CD4-positive, alpha-beta T cell (primary cell): ENCODE measurements at regions of chr15 and their contacts with region 1.

Region 1: DNA sequence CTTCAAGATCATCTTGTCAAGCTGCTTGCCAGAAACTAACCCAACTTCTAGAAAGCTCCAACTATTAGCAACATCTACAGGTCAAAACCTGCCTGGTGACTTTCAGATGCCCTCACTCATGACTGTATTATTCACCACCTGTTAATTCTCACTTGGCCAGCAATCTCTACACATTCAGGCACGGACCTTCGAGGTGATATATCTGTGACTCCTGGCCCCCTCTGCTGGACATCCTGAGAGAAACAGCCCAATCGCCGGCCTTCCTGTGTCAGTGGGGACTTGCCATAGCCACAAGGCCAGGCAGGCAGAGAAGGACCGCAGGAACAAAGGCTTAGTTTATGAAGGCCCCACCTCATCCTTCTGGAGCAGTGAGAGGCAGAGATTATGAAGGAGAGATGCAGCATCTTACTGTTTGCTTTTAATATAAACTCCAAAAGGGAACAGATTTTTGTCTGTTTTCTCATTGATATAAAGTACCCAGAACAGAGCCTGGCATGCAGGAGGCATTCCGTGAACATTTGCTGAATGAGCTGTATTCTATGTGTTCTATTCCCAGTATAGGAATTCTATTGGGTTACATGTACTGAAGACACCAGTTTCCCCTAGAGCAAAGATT is 24.4 kb upstream of the OCA2 start:
- DNase-seq: peak in 11 of 14 experiments; percentile 13 to 78 (median 43)
- ATAC-seq: peak; percentile 57
- H3K4me3 ChIP-seq: no peak overlapping the region
- H3K4me3 Mint-ChIP-seq: no peak overlapping the region
- H3K27ac ChIP-seq: no peak overlapping the region
- H3K27ac Mint-ChIP-seq: no peak overlapping the region
- H3K4me1 ChIP-seq: peaks cover 15% of the 10 kb centered on the region
- H3K4me1 Mint-ChIP-seq: peaks cover 12% of the 10 kb centered on the region
- H3K27me3 ChIP-seq: no peaks in the 10 kb centered on the region
- H3K27me3 Mint-ChIP-seq: no peaks in the 10 kb centered on the region
- CTCF ChIP-seq: peak; percentile 47

Region 2: GRCh38 chr15:28086175-28086703 is 37.3 kb before region 1 on chr15:
- CTCF ChIA-PET with region 1: no interaction called
- POLR2A ChIA-PET with region 1: no interaction called
- intact Hi-C with region 1: loop called (anchors 1 to 2 kb)
- DNase-seq: peak in 12 of 14 experiments; percentile 22 to 84 (median 48)
- ATAC-seq: peak; percentile 100
- H3K4me3 ChIP-seq: no peak overlapping the region
- H3K4me3 Mint-ChIP-seq: no peak overlapping the region
- H3K27ac ChIP-seq: no peak overlapping the region
- H3K27ac Mint-ChIP-seq: no peak overlapping the region
- H3K4me1 ChIP-seq: peaks cover 3% of the 10 kb centered on the region
- H3K4me1 Mint-ChIP-seq: no peaks in the 10 kb centered on the region
- H3K27me3 ChIP-seq: peaks cover 18 to 27% of the 10 kb centered on the region in 2 experiments
- H3K27me3 Mint-ChIP-seq: peaks cover 57% of the 10 kb centered on the region
- CTCF ChIP-seq: peak; percentile 73

Region 3: DNA sequence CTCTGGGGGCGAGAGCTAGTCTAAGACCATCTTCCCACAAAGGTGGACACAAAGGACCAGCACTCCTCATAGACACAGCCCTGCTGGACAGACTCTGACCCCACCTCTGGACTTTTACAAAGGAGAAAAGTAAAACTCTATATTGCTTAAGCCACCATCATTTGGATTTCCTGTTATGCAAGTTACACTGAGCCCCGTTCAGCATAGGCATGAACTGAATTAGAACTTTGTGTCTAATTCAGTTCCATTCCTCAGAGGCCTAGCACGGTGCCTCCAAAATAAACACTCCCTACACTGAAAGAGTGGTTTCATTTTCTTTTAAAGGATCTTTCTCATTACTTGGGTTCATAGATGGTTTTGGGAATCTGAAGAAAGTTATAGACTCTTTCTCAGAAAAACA is 54.8 kb after region 1 on chr15:
- CTCF ChIA-PET with region 1: no interaction called
- POLR2A ChIA-PET with region 1: no interaction called
- intact Hi-C with region 1: loop called in 1 of 2 experiments (anchors 5 kb)
- DNase-seq: no peak
- ATAC-seq: no peak
- H3K4me3 ChIP-seq: no peak overlapping the region
- H3K4me3 Mint-ChIP-seq: no peak overlapping the region
- H3K27ac ChIP-seq: no peak overlapping the region
- H3K27ac Mint-ChIP-seq: no peak overlapping the region
- H3K4me1 ChIP-seq: peaks cover 5% of the 10 kb centered on the region
- H3K4me1 Mint-ChIP-seq: no peaks in the 10 kb centered on the region
- H3K27me3 ChIP-seq: no peaks in the 10 kb centered on the region
- H3K27me3 Mint-ChIP-seq: no peaks in the 10 kb centered on the region
- CTCF ChIP-seq: no peak

Region 4: GRCh38 chr15:28208583-28208982 is 85.1 kb after region 1 on chr15:
- CTCF ChIA-PET with region 1: no interaction called
- POLR2A ChIA-PET with region 1: no interaction called
- intact Hi-C with region 1: loop called in 1 of 2 experiments (anchors 5 kb)
- DNase-seq: no peak
- ATAC-seq: no peak
- H3K4me3 ChIP-seq: no peak overlapping the region
- H3K4me3 Mint-ChIP-seq: no peak overlapping the region
- H3K27ac ChIP-seq: no peak overlapping the region
- H3K27ac Mint-ChIP-seq: no peak overlapping the region
- H3K4me1 ChIP-seq: peaks cover 3% of the 10 kb centered on the region
- H3K4me1 Mint-ChIP-seq: no peaks in the 10 kb centered on the region
- H3K27me3 ChIP-seq: no peaks in the 10 kb centered on the region
- H3K27me3 Mint-ChIP-seq: no peaks in the 10 kb centered on the region
- CTCF ChIP-seq: no peak

Region 5: GRCh38 chr15:28219116-28219515 is 95.6 kb after region 1 on chr15:
- CTCF ChIA-PET with region 1: no interaction called
- POLR2A ChIA-PET with region 1: no interaction called
- intact Hi-C with region 1: loop called in 1 of 2 experiments (anchors 5 kb)
- DNase-seq: no peak
- ATAC-seq: no peak
- H3K4me3 ChIP-seq: no peak overlapping the region
- H3K4me3 Mint-ChIP-seq: no peak overlapping the region
- H3K27ac ChIP-seq: no peak overlapping the region
- H3K27ac Mint-ChIP-seq: no peak overlapping the region
- H3K4me1 ChIP-seq: no peaks in the 10 kb centered on the region
- H3K4me1 Mint-ChIP-seq: no peaks in the 10 kb centered on the region
- H3K27me3 ChIP-seq: no peaks in the 10 kb centered on the region
- H3K27me3 Mint-ChIP-seq: no peaks in the 10 kb centered on the region
- CTCF ChIP-seq: no peak